ENCODE measurements at regions of chr11 and their contacts with region 1.

Region 1: GRCh38 chr11:120688163-120688562 is 176.6 kb downstream of the GRIK4 start:
- DNase-seq: no peak
- ATAC-seq: peak; percentile 54
- H3K4me3 ChIP-seq: no peak overlapping the region
- H3K27ac ChIP-seq: no peak overlapping the region
- H3K4me1 ChIP-seq: no peaks in the 10 kb centered on the region
- H3K27me3 ChIP-seq: peaks cover 25% of the 10 kb centered on the region
- CTCF ChIP-seq: no peak

Region 2: GRCh38 chr11:120511116-120511819 is 176.9 kb before region 1 on chr11 and contains the start of gene GRIK4:
- intact Hi-C with region 1: loop called (anchors 5 kb)
- DNase-seq: peak; percentile 89
- ATAC-seq: peak; percentile 90
- H3K4me3 ChIP-seq: peak within 1 kb of the TSS; percentile 38
- H3K27ac ChIP-seq: no peak within 1 kb of the TSS
- H3K4me1 ChIP-seq: no peaks in the 10 kb centered on the region
- H3K27me3 ChIP-seq: peaks cover 52% of the 10 kb centered on the region
- CTCF ChIP-seq: peak; percentile 97
- total RNA-seq, gene GRIK4: 4.3 TPM

Region 3: GRCh38 chr11:120912504-120912903 is 224.3 kb after region 1 on chr11:
- intact Hi-C with region 1: no loop called
- DNase-seq: no peak
- ATAC-seq: no peak
- H3K4me3 ChIP-seq: no peak overlapping the region
- H3K27ac ChIP-seq: no peak overlapping the region
- H3K4me1 ChIP-seq: no peaks in the 10 kb centered on the region
- H3K27me3 ChIP-seq: no peaks in the 10 kb centered on the region
- CTCF ChIP-seq: peak; percentile 25

Measured in upper lobe of right lung (tissue), 1 donor.